ENCODE measurements at regions of chr22 and their contacts with region 1.

Region 1: DNA sequence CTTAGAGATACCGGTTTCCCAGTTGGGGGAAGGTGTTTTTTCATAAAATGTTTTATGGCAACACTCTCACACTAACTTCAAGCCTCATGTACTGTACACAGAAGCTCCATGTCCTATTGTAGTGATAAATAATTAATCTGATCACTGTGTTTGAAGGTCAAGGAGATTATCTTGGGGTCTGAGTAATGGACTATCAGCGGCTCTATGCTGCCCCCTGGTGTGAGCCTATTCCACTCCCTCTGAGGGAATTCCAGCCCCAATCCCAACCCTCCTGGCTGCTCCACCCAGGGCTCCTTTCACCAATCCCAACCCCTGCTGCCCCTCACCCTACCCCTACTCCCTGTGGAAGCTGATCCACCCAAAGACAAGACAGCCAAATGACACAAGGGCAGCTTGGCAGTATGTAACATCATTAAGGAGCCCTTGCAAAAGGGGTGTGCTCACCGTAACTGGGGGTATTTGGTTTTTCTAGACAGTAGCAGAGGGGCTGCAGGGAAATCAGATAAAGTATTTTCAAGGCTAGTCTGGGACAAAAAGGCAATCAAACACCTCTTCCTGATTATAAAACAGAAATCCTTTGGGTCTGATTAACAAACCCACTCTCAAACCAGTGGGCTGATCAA is 22.3 kb downstream of the HPS4 start:
- DNase-seq: peak; percentile 53 to 90
- H3K4me3 ChIP-seq: no peak overlapping the region
- H3K27ac ChIP-seq: no peak overlapping the region
- H3K4me1 ChIP-seq: no peaks in the 10 kb centered on the region
- H3K27me3 ChIP-seq: no peaks in the 10 kb centered on the region
- CTCF ChIP-seq: peak; percentile 58 to 80 (median 76)
- EP300 ChIP-seq: no peak
- POLR2A ChIP-seq: no peak
- RAD21 ChIP-seq: peak; percentile 81 to 84

Region 2: GRCh38 chr22:26377170-26377830 is 84.0 kb before region 1 on chr22:
- CTCF ChIA-PET with region 1: interaction called, 30 read pairs
- POLR2A ChIA-PET with region 1: no interaction called
- DNase-seq: no peak
- H3K4me3 ChIP-seq: peak overlapping the region in 2 of 4 experiments; percentile 10 to 34; a peak in 2 of 8 replicates
- H3K27ac ChIP-seq: no peak overlapping the region
- H3K4me1 ChIP-seq: peaks cover 0 to 4% (median 0%) of the 10 kb centered on the region in 4 experiments; a peak in 1 of 7 replicates
- H3K27me3 ChIP-seq: no peaks in the 10 kb centered on the region
- CTCF ChIP-seq: peak in 2 of 3 experiments; percentile 29 to 32; a peak in 2 of 4 replicates
- EP300 ChIP-seq: no peak
- POLR2A ChIP-seq: no peak
- RAD21 ChIP-seq: peak; percentile 55 to 62

Region 3: GRCh38 chr22:26398741-26399153 is 62.6 kb before region 1 on chr22:
- CTCF ChIA-PET with region 1: interaction called, 98 read pairs
- POLR2A ChIA-PET with region 1: interaction called, 3 read pairs
- DNase-seq: peak; percentile 33 to 62
- H3K4me3 ChIP-seq: no peak overlapping the region
- H3K27ac ChIP-seq: no peak overlapping the region
- H3K4me1 ChIP-seq: no peaks in the 10 kb centered on the region
- H3K27me3 ChIP-seq: no peaks in the 10 kb centered on the region
- CTCF ChIP-seq: peak; percentile 66 to 82 (median 79)
- EP300 ChIP-seq: no peak
- POLR2A ChIP-seq: no peak
- RAD21 ChIP-seq: peak; percentile 91 to 92

Region 4: DNA sequence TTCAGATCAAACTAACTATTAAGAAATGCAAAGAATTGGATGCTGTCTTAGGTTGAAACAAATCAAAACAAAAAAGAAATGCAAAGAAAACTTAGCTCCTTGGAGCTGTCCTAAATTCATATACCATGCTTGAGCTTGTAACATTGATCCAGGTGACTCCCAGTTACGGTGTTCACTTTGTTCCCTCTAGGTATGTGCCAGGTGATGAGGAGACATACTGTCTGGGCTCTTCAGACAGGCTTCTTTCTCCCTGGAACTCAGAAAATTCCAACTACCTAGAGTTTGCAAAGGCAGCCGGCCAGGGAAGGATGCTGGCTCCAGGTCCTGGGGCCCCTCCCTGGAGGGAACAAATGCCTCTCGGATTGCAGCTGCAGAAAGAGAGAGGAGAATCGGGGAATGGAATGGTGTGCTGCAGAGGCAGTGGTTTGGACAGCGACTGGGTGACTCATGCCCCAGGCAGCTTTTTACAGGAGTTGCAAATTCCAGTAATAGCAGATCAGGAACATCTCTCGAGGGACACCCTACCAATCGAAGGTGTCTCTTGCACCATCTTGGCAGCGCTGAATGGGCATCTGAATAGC is 44.5 kb before region 1 on chr22:
- CTCF ChIA-PET with region 1: interaction called, 15 read pairs
- POLR2A ChIA-PET with region 1: no interaction called
- DNase-seq: peak; percentile 54 to 70
- H3K4me3 ChIP-seq: no peak overlapping the region
- H3K27ac ChIP-seq: no peak overlapping the region
- H3K4me1 ChIP-seq: no peaks in the 10 kb centered on the region
- H3K27me3 ChIP-seq: 0 out of 7 replicates have a peak, but pooled peaks cover 0 to 4% (median 0%) of the 10 kb centered on the region in 4 experiments
- CTCF ChIP-seq: no peak
- EP300 ChIP-seq: no peak
- POLR2A ChIP-seq: no peak
- RAD21 ChIP-seq: no peak

Region 5: DNA sequence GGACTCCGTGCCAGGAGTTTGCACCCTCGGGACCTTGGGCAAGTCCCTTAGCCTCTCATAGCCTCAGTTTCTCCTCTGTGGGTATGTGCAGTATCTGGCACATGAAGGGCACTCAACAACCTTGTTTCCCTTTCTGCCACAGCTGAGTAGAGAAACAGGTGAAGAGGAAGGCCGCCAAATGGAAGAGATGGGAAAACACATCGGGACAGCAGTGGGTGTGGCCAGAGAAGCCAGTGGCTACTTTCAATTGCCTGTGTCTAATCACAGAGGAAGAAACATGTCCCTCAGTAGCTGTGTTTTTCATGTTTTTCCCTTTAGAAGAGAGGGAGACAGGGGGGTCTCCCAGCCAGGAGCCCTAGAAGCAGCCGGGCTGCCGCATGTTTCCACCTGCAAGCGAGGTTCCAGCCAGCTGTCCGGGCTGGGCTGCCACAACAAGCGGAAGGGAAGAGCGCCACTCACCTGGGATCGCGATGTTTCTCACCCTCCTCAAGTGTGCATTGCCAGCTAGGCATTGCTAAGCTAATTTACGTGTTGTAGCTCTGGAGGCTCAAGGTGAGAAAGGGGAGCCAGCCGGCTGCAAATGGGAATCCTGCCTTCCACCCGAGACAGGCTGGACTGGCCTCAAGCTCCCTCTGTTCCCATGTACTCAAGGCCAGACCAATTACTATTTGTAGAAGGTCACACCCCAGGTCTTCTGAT is 15.6 kb before region 1 on chr22:
- CTCF ChIA-PET with region 1: interaction called, 19 read pairs
- POLR2A ChIA-PET with region 1: no interaction called
- DNase-seq: no peak
- H3K4me3 ChIP-seq: no peak overlapping the region
- H3K27ac ChIP-seq: no peak overlapping the region
- H3K4me1 ChIP-seq: no peaks in the 10 kb centered on the region
- H3K27me3 ChIP-seq: no peaks in the 10 kb centered on the region
- CTCF ChIP-seq: no peak
- EP300 ChIP-seq: no peak
- POLR2A ChIP-seq: no peak
- RAD21 ChIP-seq: no peak

Region 6: GRCh38 chr22:26483439-26484359 is 22.4 kb after region 1 on chr22 and contains the starts of genes HPS4 and SRRD:
- CTCF ChIA-PET with region 1: interaction called, 18 read pairs
- POLR2A ChIA-PET with region 1: interaction called, 5 read pairs
- DNase-seq: peak; percentile 62 to 96
- H3K4me3 ChIP-seq: peak within 1 kb of the TSS; percentile 77 to 99 (median 90)
- H3K27ac ChIP-seq: peak within 1 kb of the TSS; percentile 76
- H3K4me1 ChIP-seq: peaks cover 0 to 14% (median 6%) of the 10 kb centered on the region in 4 experiments; a peak in 5 of 7 replicates
- H3K27me3 ChIP-seq: no peaks in the 10 kb centered on the region; a peak in 1 of 7 replicates
- CTCF ChIP-seq: no peak
- EP300 ChIP-seq: peak in 1 of 2 experiments; percentile 85; a peak in 2 of 3 replicates
- POLR2A ChIP-seq: peak; percentile 64 to 92
- RAD21 ChIP-seq: no peak
- total RNA-seq, gene HPS4: 32.9 and 35.2 TPM in 2 replicates
- total RNA-seq, gene SRRD: 25.3 and 26.3 TPM in 2 replicates

Region 7: DNA sequence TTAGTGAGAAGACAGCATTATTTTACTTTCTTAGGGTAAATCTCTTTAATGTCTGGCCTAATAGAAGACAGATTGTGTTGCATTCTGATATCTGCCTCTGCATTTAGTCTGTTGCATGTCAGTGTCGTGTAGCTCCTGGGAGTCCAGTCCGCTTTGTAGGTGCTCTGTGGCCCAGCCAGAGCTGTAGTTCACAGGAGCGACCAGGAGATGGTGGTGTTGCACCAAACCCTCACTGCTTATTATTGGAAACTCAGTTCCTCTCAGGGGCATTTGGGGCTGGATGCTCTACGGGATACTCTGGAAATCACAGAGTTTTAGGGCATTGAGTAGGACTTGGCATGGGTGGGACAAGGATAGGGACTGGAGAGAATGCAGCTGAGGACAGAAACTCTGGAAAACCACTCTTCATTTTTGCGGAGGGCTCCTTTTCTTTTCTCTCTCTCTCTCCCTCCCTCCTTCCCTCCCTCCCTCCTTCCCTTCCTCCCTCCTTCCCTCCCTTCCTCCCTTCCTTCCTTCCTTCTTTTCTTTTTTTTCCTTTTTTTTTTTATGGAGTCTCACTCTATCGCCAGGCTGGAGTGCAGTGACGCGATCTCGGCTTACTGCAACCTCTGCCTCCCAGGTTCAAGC is 217.8 kb after region 1 on chr22:
- CTCF ChIA-PET with region 1: no interaction called
- POLR2A ChIA-PET with region 1: no interaction called
- DNase-seq: peak; percentile 71 to 94
- H3K4me3 ChIP-seq: no peak overlapping the region
- H3K27ac ChIP-seq: no peak overlapping the region
- H3K4me1 ChIP-seq: peaks cover 4 to 11% (median 8%) of the 10 kb centered on the region in 4 experiments
- H3K27me3 ChIP-seq: no peaks in the 10 kb centered on the region
- CTCF ChIP-seq: peak; percentile 84 to 99 (median 85)
- EP300 ChIP-seq: no peak
- POLR2A ChIP-seq: no peak
- RAD21 ChIP-seq: peak; percentile 96 to 98

Measured in H1 (cell line).